ENCODE measurements at regions of chr3 and their contacts with region 1.

Region 1: DNA sequence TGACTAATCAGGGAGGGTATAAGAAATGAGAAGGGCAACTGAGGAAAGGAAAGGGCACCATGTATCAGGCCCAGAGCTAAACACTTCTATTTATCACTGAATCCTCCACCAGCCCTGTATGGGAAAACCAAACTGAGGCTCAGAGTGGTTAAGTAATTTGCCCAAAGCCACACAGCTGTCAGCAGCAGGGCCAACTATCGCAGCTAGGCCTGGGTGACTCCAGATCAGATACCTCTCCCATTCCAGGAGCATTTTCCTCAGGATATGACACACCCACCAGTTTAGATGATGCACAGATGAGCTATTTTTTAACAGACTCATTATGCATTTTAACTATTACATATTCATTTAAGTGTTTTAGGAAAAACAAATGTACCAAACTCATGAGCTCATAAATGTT is 14.5 kb downstream of the NUP210 start:
- DNase-seq: no peak
- ATAC-seq: no peak
- H3K4me3 ChIP-seq: no peak overlapping the region
- H3K27ac ChIP-seq: no peak overlapping the region
- H3K4me1 ChIP-seq: no peaks in the 10 kb centered on the region
- CTCF ChIP-seq: no peak
- EP300 ChIP-seq: no peak
- POLR2A ChIP-seq: no peak
- RAD21 ChIP-seq: no peak

Region 2: DNA sequence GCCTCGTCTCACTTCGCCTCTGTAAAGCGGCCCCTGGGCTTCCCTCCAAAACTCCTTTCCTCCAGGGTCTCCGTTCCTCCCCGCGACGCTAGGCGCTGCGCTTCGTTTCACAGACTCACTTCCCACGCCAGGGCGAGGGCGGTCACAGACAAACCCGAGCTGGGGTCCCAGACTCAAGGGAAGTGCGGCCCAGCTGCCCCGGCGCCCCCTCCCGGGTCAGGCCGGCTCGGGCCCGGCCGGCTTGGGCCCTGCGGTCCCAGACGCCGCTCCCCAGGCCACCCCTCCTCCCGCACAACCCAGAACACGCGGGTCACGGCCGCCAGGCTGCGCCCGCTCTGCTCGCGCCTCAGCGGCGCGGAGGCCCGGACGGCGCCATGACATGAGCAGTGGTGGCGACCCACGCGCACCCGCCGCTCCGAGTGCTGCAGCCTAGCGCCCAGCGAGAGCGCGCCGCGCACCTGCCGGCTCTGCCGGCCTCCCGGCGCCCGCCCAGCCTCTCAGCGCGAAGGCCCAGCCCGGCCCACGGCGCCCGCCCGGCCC is 14.0 kb after region 1 on chr3:
- CTCF ChIA-PET with region 1: interaction called, 11 read pairs
- POLR2A ChIA-PET with region 1: no interaction called
- DNase-seq: peak; percentile 48 to 51
- ATAC-seq: peak; percentile 82 to 84
- H3K4me3 ChIP-seq: peak overlapping the region; percentile 81
- H3K27ac ChIP-seq: peak overlapping the region; percentile 81 to 96
- H3K4me1 ChIP-seq: peaks cover 15% of the 10 kb centered on the region
- CTCF ChIP-seq: peak; percentile 10; the same call in 1 of the 3 replicates
- EP300 ChIP-seq: no peak
- POLR2A ChIP-seq: no peak
- RAD21 ChIP-seq: no peak

Region 3: GRCh38 chr3:13574798-13575451 is 169.3 kb after region 1 on chr3:
- CTCF ChIA-PET with region 1: no interaction called
- POLR2A ChIA-PET with region 1: no interaction called
- DNase-seq: no peak
- ATAC-seq: no peak
- H3K4me3 ChIP-seq: no peak overlapping the region
- H3K27ac ChIP-seq: no peak overlapping the region
- H3K4me1 ChIP-seq: no peaks in the 10 kb centered on the region
- CTCF ChIP-seq: no peak
- EP300 ChIP-seq: no peak
- POLR2A ChIP-seq: no peak
- RAD21 ChIP-seq: no peak

Measured in A549 (cell line).